Heart right ventricle (tissue), 16 donors: ENCODE measurements at regions of chr11 and their contacts with region 1.

Region 1: DNA sequence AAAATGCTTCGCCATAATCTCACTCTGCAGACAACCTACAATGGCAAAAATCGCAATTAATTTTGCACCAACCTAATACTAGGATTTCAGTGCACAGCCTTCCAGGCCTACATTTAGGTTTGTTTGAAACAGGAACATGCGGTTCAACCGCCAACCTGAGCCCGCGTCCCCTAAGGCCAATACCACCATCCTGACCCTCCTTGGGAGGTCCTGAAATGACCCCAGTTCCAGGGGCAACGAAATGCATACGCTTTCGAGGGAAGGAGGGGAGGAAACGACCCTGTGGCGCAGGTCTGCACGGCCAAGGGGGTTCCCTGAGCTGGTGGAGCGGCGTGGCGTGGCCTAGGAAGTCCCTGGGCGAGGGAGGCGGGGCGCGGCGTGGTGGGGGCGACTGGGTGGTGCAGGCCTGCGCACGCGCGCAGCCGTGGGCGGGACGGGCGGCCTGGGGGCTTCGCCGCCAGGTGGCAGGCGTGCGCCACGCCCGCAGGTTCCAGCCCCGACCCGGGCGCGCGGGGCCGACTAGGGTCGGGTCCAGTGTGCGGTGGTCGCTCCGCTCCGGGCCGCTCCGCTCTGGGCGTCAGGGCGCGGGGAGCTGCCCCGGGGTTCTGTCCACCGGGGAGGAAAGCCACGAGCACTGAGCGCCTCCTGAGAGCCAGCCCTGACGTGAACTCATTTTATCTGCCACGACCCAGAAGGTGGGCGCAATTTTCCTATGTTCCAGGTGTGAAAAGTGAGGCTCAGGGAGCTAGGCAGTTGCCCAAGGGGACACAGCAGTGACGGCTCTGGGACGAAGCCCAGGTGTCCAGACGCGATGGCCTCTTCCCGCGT is 94.1 kb downstream of the SWAP70 start:
- DNase-seq: peak; percentile 89 to 92
- ATAC-seq: peak; percentile 52 to 89 (median 75)
- H3K4me3 ChIP-seq: peak overlapping the region; percentile 50 to 86 (median 74)
- H3K27ac ChIP-seq: peak overlapping the region; percentile 57 to 97 (median 94)
- H3K4me1 ChIP-seq: peaks cover 14 to 76% (median 53%) of the 10 kb centered on the region in 9 donors
- H3K27me3 ChIP-seq: no peaks in the 10 kb centered on the region
- CTCF ChIP-seq: peak; percentile 69 to 96 (median 91)

Region 2: DNA sequence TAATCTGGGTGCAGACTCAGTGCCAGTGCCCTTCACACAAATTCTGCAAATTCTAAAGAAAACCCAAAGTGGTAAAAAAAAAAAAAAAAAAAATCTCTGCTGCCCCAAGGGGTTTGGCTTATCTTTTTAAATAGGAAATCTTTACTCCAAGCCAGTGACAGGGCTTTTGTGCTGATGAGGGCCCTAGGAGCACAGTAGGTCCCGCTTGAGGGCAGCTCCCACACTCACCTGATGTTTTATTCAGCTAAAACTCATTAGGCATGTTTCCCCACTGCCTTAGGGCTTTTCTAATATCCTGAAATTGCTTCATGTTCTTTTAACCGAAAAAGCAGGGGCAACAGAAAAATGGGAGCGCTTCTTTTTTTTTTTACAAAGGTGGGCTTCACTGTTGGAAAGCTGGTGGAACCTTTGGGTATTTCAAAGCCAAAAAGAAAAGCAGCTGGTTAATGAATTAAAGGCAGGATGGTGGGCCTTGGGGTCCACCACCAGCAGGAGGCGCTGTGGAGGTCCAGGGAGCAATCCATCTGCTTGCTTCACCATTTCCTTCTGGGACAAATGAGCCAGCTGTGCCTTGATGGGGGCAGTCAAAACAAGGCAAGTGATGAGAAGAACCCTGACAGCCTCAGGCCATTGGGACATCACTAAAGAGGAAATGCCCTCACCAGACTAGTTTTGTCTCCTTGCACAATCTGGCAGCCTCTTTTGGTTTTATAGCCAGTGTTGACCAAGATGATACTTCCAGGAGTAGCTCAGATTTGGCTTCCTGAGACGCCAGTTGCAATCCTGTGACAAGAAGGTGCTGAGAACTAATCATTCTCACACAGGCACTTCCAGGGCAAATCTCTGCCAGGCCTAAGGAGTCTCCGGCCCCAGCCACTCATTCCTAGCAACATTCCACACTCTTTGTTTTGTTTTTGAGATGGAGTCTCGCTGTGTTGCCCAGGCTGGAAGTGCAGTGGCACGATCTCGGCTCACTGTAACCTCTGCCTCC is 222.9 kb before region 1 on chr11:
- intact Hi-C with region 1: loop called in 2 of 10 experiments (anchors 10 kb)
- DNase-seq: peak; percentile 72 to 83
- ATAC-seq: peak in 7 of 8 donors; percentile 52 to 91 (median 74)
- H3K4me3 ChIP-seq: no peak overlapping the region
- H3K27ac ChIP-seq: no peak overlapping the region
- H3K4me1 ChIP-seq: peaks cover 0 to 13% (median under 1%) of the 10 kb centered on the region in 9 donors
- H3K27me3 ChIP-seq: no peaks in the 10 kb centered on the region
- CTCF ChIP-seq: peak; percentile 56 to 83 (median 75)

Region 3: GRCh38 chr11:9815486-9816136 is 57.6 kb after region 1 on chr11:
- intact Hi-C with region 1: loop called in 1 of 10 experiments (anchors 5 kb)
- DNase-seq: no peak
- ATAC-seq: peak in 1 of 8 donors; percentile 79
- H3K4me3 ChIP-seq: no peak overlapping the region
- H3K27ac ChIP-seq: no peak overlapping the region
- H3K4me1 ChIP-seq: peaks cover 0 to 15% (median 3%) of the 10 kb centered on the region in 9 donors
- H3K27me3 ChIP-seq: no peaks in the 10 kb centered on the region
- CTCF ChIP-seq: no peak

Region 4: GRCh38 chr11:9861860-9862725 is 104.1 kb after region 1 on chr11:
- intact Hi-C with region 1: loop called in 1 of 10 experiments (anchors 5 kb)
- DNase-seq: peak; percentile 13 to 39
- ATAC-seq: peak in 7 of 8 donors; percentile 77 to 90 (median 82)
- H3K4me3 ChIP-seq: no peak overlapping the region
- H3K27ac ChIP-seq: no peak overlapping the region
- H3K4me1 ChIP-seq: peaks cover 0 to 19% (median 13%) of the 10 kb centered on the region in 9 donors
- H3K27me3 ChIP-seq: no peaks in the 10 kb centered on the region
- CTCF ChIP-seq: peak; percentile 53 to 85 (median 74)

Region 5: DNA sequence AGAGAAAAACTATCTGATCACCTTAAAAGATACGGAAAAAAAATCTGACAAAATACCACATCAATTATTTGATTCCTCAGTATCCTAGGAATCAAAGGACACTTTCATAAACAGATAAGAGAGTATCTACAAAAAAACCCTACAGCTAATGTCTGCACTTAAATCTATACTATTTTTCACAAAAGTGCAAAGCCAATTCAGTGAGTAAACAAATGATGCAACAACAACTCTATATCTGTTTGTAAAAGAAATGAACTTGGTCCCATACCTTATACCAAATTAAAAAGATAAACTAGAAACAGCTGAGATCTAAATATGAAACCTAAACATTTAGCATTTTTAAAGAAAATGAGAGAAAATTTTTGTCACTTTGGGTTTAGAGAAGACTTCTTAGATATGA is 169.6 kb after region 1 on chr11:
- intact Hi-C with region 1: no loop called
- DNase-seq: no peak
- ATAC-seq: no peak
- H3K4me3 ChIP-seq: no peak overlapping the region
- H3K27ac ChIP-seq: no peak overlapping the region
- H3K4me1 ChIP-seq: peaks cover 0 to 7% (median 0%) of the 10 kb centered on the region in 9 donors
- H3K27me3 ChIP-seq: no peaks in the 10 kb centered on the region
- CTCF ChIP-seq: no peak

Region 6: GRCh38 chr11:9972989-9973388 is 215.0 kb after region 1 on chr11:
- intact Hi-C with region 1: loop called (anchors 1 to 10 kb)
- DNase-seq: peak in 1 of 2 donors; percentile 9
- ATAC-seq: peak; percentile 47 to 82 (median 71)
- H3K4me3 ChIP-seq: no peak overlapping the region
- H3K27ac ChIP-seq: no peak overlapping the region
- H3K4me1 ChIP-seq: peaks cover 0 to 22% (median 16%) of the 10 kb centered on the region in 9 donors
- H3K27me3 ChIP-seq: no peaks in the 10 kb centered on the region
- CTCF ChIP-seq: peak; percentile 40 to 82 (median 72)

Region 7: DNA sequence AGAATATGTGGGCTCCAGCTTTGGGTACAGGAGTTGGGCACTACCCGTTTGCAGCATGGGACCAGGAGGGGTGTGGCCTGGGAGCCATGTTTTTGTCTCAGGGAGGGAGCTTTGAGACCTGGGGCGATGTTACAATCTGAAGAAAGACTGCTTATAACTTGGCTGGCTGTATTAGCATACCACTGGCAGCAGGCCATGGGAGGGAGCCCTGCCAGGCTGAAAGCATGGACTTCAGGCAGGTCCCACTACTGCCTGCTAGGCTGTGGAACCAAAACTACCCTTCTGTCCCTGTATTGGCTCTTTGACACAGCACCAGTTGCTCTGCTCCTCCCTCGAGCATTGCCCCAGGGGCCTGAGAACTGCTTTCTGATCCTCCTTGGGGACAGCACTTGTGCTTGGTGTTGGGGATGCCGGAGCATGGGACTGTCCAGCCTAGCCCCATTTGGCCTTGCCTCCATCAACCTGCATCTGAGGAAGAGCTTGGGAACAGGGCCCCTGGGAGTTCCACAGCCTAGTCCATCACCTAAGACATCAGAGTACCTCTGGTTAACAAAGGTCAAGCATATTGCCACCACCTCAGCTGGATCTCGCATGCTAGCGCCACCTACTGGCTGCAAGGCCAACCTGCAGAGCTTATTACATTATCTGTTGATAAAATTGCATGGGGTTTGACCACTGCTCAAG is 318.6 kb after region 1 on chr11:
- intact Hi-C with region 1: no loop called
- DNase-seq: peak; percentile 54 to 58
- ATAC-seq: peak; percentile 49 to 87 (median 75)
- H3K4me3 ChIP-seq: no peak overlapping the region
- H3K27ac ChIP-seq: no peak overlapping the region
- H3K4me1 ChIP-seq: peaks cover 0 to 12% (median 8%) of the 10 kb centered on the region in 9 donors
- H3K27me3 ChIP-seq: no peaks in the 10 kb centered on the region
- CTCF ChIP-seq: peak in 8 of 9 donors; percentile 16 to 69 (median 44)

Region 8: DNA sequence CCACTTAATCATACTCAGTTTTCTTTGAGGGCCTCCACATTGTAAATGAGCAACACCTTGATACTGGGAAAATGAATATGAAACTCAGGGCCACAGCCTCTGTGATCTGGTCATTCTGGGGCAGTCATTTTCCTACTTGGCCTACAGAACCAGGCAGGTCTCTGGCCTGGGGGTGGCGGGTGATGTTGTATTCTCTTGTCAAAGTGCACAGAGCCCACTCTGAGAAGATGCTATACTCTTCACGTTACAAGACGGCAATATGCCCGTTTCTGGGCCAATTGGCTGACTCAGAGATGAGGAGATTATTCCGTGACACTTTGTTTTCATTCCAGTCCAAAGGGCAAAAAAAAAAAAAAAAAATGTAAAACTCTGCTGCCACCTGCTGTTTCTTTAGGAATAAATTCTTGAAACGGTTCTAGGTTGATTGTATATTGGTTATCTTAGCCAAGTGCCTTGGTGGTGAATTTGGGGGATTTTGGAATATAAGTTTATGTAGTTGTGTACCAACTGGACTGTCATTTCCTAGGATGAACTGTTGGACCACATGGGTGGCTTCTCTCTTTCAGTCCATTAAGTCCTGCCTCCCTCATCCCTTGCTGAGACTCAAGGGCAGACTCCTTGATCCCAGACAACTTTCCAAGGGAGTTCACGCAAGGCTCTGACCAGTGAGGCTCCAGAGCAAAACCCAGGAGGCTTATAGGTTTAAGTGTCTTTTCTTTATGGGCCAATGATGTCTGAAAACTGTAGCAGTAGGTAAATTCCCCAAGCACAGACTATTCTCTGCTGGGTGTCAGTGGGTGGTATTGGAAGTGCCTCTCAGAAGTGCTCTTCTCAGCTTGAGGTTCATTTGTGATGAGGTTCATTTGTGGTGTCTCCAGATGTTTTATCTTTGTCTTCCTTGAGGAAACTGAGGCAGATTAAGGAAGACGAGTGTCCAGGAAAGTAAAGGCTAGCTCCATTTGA is 565.1 kb after region 1 on chr11:
- intact Hi-C with region 1: loop called in 7 of 10 experiments (anchors 1 to 5 kb)
- DNase-seq: peak in 1 of 2 donors; percentile 46
- ATAC-seq: peak; percentile 23 to 65 (median 59)
- H3K4me3 ChIP-seq: no peak overlapping the region
- H3K27ac ChIP-seq: peak overlapping the region in 5 of 10 donors; percentile 17 to 59 (median 25)
- H3K4me1 ChIP-seq: peaks cover 5 to 58% (median 34%) of the 10 kb centered on the region in 9 donors
- H3K27me3 ChIP-seq: no peaks in the 10 kb centered on the region
- CTCF ChIP-seq: peak; percentile 33 to 75 (median 62)

Region 9: DNA sequence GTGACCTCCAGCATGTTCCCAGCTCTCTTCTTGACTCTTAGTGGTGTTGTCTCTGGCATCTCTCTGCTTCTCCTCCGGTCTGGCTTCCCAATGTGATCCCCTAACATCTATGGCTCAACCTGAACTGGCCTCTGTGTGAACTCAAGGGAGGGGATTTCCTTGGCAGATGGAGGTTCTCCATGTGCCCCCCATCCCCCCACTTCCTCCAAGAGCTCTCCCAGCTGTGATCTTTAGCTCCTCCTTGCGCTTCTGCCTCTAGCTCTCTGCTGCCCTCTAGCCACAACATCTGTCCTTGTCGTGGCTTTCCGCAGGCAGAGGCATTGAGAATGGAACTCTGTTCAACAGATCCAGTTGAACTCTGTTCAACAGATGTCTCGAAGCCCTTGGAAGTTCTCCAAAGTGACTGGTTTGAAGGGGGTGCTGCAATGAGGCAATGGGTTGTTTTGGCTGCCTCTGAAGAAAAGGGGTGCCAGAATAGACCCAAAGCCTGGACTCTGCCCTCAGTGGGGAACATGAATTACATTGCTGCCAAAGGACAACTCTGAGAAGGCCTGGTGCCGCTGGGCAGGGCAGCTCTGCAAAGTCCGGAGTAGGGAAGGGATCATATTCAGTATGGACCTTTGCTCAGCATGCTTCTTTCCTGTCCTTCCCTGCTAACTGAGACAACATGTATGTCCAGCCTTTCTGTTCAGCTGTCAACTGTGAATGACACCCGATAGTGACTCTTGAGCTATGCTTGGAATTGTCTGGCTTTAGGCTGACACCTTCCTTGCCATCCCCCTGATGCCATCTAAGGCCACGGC is 608.7 kb after region 1 on chr11:
- intact Hi-C with region 1: loop called in 1 of 10 experiments (anchors 5 kb)
- DNase-seq: peak; percentile 68 to 90
- ATAC-seq: peak; percentile 87 to 98 (median 96)
- H3K4me3 ChIP-seq: no peak overlapping the region
- H3K27ac ChIP-seq: peak overlapping the region in 5 of 10 donors; percentile 3 to 56 (median 25)
- H3K4me1 ChIP-seq: peaks cover 0 to 11% (median 10%) of the 10 kb centered on the region in 9 donors
- H3K27me3 ChIP-seq: no peaks in the 10 kb centered on the region
- CTCF ChIP-seq: peak; percentile 63 to 93 (median 87)

Region 10: DNA sequence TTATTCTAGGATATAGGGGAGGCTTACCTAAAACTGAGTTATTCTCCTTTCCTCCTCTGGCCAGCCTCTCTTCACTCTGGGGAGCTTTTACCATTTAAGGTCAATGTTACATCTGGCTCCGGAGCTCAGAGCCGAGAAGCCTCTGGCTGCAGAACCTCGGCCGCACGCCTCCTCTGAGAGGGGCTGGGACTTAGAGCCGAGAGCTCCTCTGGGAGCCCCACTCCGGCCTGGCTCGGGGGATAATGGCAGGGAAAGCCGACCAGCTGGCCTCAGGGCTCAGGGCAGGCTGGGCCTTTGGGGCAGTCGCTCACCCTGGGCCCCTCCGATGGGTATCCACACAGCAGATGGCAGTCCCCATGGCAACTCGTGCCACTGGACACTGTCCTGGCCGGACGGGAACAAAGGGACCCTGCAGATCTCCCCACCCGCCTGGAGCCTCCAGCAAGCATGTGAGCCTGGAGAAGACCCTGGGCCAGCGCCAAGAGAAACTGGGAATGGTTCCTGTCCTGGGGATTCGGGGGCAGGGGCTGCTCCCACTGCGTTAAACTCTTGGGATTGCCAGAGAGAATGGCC is 935.6 kb after region 1 on chr11 and contains the start of gene IRAG1:
- intact Hi-C with region 1: no loop called
- DNase-seq: peak; percentile 61 to 71
- ATAC-seq: peak; percentile 74 to 89 (median 80)
- H3K4me3 ChIP-seq: peak within 1 kb of the TSS in 9 of 10 donors; percentile 20 to 54 (median 36)
- H3K27ac ChIP-seq: peak within 1 kb of the TSS in 9 of 10 donors; percentile 25 to 81 (median 65)
- H3K4me1 ChIP-seq: peaks cover 0 to 49% (median 13%) of the 10 kb centered on the region in 9 donors
- H3K27me3 ChIP-seq: peaks cover 0 to 8% (median 0%) of the 10 kb centered on the region in 7 donors
- CTCF ChIP-seq: no peak
- total RNA-seq, gene IRAG1: 2.5 to 8.3 (median 5.3) TPM